ENCODE measurements at regions of chr4 and their contacts with region 1.

Region 1: DNA sequence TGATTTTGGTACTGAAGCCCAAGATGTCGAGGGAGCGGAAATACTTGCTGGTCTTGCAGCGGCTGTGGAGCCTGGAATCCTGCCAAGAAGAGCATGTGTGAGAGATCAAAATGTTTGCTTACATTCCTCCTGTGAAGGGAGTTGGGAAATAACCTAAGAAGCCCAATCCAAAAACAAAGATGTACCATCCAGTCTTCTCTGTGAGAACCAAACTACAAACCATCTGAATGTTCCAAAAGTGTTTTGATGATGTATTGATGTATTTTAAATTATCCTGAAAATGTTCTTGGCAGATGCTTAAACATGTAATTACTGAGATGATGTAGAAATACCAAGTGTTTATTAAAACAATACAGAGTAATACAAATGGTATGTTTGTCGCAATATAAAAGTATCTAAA is 10.1 kb upstream of the ADH1A start:
- DNase-seq: peak; percentile 91
- H3K4me3 ChIP-seq: no peak overlapping the region
- H3K27ac ChIP-seq: peak overlapping the region in 1 of 2 donors; percentile 26
- H3K4me1 ChIP-seq: no peaks in the 10 kb centered on the region
- H3K27me3 ChIP-seq: no peaks in the 10 kb centered on the region
- CTCF ChIP-seq: no peak
- POLR2A ChIP-seq: no peak

Region 2: GRCh38 chr4:99205153-99205979 is 95.6 kb before region 1 on chr4:
- intact Hi-C with region 1: loop called (anchors 5 kb)
- DNase-seq: no peak
- H3K4me3 ChIP-seq: no peak overlapping the region
- H3K27ac ChIP-seq: no peak overlapping the region
- H3K4me1 ChIP-seq: no peaks in the 10 kb centered on the region
- H3K27me3 ChIP-seq: no peaks in the 10 kb centered on the region
- CTCF ChIP-seq: no peak
- POLR2A ChIP-seq: no peak